ENCODE measurements at regions of chr15 and their contacts with region 1.

Region 1: DNA sequence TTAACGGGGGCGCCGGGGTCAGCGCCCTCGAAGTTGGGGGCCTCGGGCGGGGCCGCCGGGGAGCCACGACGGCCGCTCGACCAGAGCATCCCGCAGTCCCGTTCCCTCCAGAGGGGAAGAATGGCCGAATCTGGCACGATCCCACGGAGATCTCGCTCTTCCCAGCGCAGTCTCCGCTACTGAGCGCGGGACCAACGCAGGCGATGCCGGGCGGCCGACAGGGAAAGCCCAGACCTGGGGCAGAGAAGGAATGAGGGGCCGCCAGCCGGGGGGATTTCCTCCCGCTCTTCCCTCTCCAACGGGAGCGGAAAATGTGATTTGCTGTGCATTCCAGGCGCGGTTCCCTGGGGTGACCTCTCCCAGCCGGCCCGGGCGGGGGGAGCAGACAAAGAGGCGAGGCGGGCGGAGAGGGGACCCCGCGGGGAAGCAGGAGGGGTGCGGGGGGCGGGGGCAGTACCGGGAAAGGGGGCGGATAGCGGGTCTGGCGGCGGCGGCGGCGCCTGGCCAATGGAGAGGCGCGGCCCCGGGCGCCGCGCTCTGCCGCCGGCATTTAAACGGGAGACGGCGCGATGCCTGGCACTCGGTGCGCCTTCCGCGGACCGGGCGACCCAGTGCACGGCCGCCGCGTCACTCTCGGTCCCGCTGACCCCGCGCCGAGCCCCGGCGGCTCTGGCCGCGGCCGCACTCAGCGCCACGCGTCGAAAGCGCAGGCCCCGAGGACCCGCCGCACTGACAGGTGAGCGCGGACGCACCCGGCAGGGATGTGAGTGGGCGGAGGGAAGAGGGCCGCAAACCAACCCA is at the start of gene GREM1:
- DNase-seq: no peak
- H3K4me3 Mint-ChIP-seq: peak within 1 kb of the TSS; percentile 46
- H3K27ac Mint-ChIP-seq: no peak within 1 kb of the TSS
- H3K4me1 Mint-ChIP-seq: peaks cover 12% of the 10 kb centered on the region
- H3K27me3 Mint-ChIP-seq: peaks cover 79% of the 10 kb centered on the region
- total RNA-seq, gene GREM1: not detected in 2 replicates

Region 2: GRCh38 chr15:32067115-32067514 is 650.5 kb before region 1 on chr15:
- intact Hi-C with region 1: no loop called
- DNase-seq: no peak
- H3K4me3 Mint-ChIP-seq: no peak overlapping the region
- H3K27ac Mint-ChIP-seq: no peak overlapping the region
- H3K4me1 Mint-ChIP-seq: no peaks in the 10 kb centered on the region
- H3K27me3 Mint-ChIP-seq: no peaks in the 10 kb centered on the region

Region 3: GRCh38 chr15:32657198-32657883 is 60.3 kb before region 1 on chr15:
- intact Hi-C with region 1: no loop called
- DNase-seq: peak; percentile 77
- H3K4me3 Mint-ChIP-seq: peak overlapping the region; percentile 20
- H3K27ac Mint-ChIP-seq: peak overlapping the region; percentile 8
- H3K4me1 Mint-ChIP-seq: peaks cover 19% of the 10 kb centered on the region
- H3K27me3 Mint-ChIP-seq: no peaks in the 10 kb centered on the region

Region 4: DNA sequence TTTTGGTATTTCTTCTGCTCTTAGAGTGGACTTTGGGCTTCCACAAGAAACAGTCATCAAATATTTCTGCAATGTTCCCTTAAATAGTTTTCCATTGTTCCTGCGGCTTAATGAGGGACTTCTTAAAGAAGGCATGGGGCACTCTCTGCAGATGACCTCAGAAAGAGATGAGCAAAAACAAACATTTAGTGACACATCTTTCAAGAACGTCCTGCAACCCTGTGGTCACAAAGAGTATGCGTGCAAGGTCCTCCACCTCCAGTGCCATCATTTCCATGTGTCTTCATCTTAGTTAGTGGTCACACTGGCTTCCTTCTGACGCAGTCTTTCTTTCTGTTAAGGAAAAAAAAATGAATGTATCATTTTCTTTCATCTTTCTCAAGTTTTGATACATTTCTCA is 56.4 kb after region 1 on chr15:
- intact Hi-C with region 1: loop called (anchors 2 kb)
- DNase-seq: no peak
- H3K4me3 Mint-ChIP-seq: no peak overlapping the region
- H3K27ac Mint-ChIP-seq: no peak overlapping the region
- H3K4me1 Mint-ChIP-seq: no peaks in the 10 kb centered on the region
- H3K27me3 Mint-ChIP-seq: peaks cover 2% of the 10 kb centered on the region

Region 5: DNA sequence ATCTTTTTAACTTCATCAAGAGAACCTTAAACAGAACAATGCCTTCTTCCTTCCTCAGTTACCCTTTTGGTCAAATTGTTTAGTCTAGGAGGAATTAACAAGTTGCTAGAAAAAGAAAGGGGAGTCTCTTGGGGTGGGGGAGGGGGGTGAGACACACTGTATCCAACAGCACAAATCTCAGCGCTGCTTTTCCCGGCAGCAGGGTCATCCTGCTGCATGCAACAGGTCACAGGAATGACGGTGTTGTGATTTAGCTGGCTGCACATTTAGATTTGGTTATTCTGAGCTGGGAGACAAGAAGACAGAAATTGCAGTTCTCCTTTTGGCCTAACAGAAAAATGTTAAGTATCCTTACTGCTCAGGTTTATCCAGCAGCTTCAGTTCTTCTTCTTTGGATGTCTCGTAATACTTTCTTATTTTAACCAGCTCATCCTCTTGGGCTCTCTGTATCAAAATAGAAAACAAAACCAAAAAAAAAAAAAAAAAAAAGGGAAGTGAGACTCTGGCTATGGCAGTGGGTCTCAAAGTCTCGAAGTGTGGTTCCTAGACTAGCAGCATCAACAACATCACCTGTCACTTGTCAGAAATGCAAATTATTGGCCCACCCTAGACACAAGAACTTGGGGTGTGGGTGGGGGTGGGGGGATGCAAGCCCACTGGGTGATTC is 190.6 kb after region 1 on chr15:
- intact Hi-C with region 1: no loop called
- DNase-seq: no peak
- H3K4me3 Mint-ChIP-seq: no peak overlapping the region
- H3K27ac Mint-ChIP-seq: no peak overlapping the region
- H3K4me1 Mint-ChIP-seq: no peaks in the 10 kb centered on the region
- H3K27me3 Mint-ChIP-seq: peaks cover 4% of the 10 kb centered on the region

Region 6: GRCh38 chr15:33104212-33104611 is 386.6 kb after region 1 on chr15:
- intact Hi-C with region 1: no loop called
- DNase-seq: peak; percentile 65
- H3K4me3 Mint-ChIP-seq: no peak overlapping the region
- H3K27ac Mint-ChIP-seq: no peak overlapping the region
- H3K4me1 Mint-ChIP-seq: peaks cover 2% of the 10 kb centered on the region
- H3K27me3 Mint-ChIP-seq: peaks cover 10% of the 10 kb centered on the region